Activated naive CD8-positive, alpha-beta T cell treated with anti-CD3 and anti-CD28 coated beads, Interleukin-2, amount 10 ng/mL, durations not matched to agents 7 days and 5 days (primary cell): ENCODE measurements at regions of chr4 and their contacts with region 1.

Region 1: GRCh38 chr4:80072744-80073472 is at the start of gene ANTXR2:
- DNase-seq: peak; percentile 72
- ATAC-seq: peak; percentile 91
- H3K4me3 Mint-ChIP-seq: peak within 1 kb of the TSS; percentile 94
- H3K27ac Mint-ChIP-seq: peak within 1 kb of the TSS; percentile 86
- H3K4me1 Mint-ChIP-seq: peaks cover 26% of the 10 kb centered on the region
- H3K27me3 Mint-ChIP-seq: peaks cover 5% of the 10 kb centered on the region
- total RNA-seq, gene ANTXR2: 20.8 to 27.6 TPM

Region 2: DNA sequence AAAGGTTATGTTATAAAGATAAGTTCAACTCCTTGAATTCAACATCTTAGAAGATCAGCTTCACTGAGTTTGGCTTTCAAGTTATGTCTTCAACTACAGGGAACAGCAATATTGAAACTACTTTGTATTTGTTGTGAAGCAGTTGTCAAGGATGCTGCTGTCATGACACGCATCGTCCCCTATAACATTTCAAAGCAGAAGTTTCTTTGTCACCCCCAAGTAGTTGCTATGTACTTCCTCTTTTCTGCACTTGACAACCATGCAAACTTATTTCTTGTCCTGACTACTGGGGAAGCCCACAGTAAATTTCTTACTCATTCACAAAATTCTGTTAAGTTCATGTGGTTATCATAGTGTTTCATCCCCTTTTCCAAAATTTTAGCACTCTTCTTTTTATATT is 14.2 kb before region 1 on chr4:
- POLR2A ChIA-PET with region 1: interaction called, 13 read pairs
- DNase-seq: no peak
- ATAC-seq: peak; percentile 90
- H3K4me3 Mint-ChIP-seq: peak overlapping the region; percentile 75
- H3K27ac Mint-ChIP-seq: peak overlapping the region; percentile 90
- H3K4me1 Mint-ChIP-seq: peaks cover 23% of the 10 kb centered on the region
- H3K27me3 Mint-ChIP-seq: no peaks in the 10 kb centered on the region

Region 3: GRCh38 chr4:80125252-80126177 is 52.6 kb after region 1 on chr4:
- POLR2A ChIA-PET with region 1: interaction called, 14 read pairs
- DNase-seq: no peak
- ATAC-seq: peak; percentile 89
- H3K4me3 Mint-ChIP-seq: peak overlapping the region; percentile 72
- H3K27ac Mint-ChIP-seq: peak overlapping the region; percentile 89
- H3K4me1 Mint-ChIP-seq: peaks cover 40% of the 10 kb centered on the region
- H3K27me3 Mint-ChIP-seq: no peaks in the 10 kb centered on the region

Region 4: DNA sequence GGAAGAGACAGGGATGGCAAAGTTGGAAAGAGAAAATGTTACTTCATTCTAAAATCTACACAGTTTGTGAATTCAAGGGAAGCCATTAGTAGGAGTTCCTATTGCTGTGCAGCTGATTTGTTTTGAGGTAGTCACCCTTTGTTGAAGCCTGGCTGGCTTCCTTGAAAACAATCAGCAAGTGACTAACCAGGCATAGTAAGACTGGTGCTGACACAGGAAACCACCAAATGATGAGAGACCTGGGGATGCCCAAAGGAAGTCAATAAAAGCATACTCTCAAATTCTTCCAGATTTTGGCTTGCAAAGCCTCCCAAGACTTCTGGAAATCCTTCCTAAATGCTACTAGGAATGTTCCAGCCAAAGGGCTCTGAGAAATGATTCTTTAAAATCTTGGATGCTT is 100.5 kb after region 1 on chr4:
- POLR2A ChIA-PET with region 1: interaction called, 12 read pairs
- DNase-seq: no peak
- ATAC-seq: peak; percentile 97
- H3K4me3 Mint-ChIP-seq: peak overlapping the region; percentile 38
- H3K27ac Mint-ChIP-seq: peak overlapping the region; percentile 72
- H3K4me1 Mint-ChIP-seq: peaks cover 37% of the 10 kb centered on the region
- H3K27me3 Mint-ChIP-seq: no peaks in the 10 kb centered on the region